ENCODE measurements at regions of chr6 and their contacts with region 1.

Region 1: GRCh38 chr6:105077596-105078385 is 102.0 kb downstream of the POPDC3 start:
- DNase-seq: peak; percentile 72
- H3K4me3 ChIP-seq: no peak overlapping the region
- H3K27ac ChIP-seq: no peak overlapping the region
- H3K4me1 ChIP-seq: no peaks in the 10 kb centered on the region
- H3K27me3 ChIP-seq: peaks cover 0 to 2% of the 10 kb centered on the region in 2 experiments
- CTCF ChIP-seq: peak in 1 of 2 donors; percentile 31
- POLR2A ChIP-seq: no peak

Region 2: DNA sequence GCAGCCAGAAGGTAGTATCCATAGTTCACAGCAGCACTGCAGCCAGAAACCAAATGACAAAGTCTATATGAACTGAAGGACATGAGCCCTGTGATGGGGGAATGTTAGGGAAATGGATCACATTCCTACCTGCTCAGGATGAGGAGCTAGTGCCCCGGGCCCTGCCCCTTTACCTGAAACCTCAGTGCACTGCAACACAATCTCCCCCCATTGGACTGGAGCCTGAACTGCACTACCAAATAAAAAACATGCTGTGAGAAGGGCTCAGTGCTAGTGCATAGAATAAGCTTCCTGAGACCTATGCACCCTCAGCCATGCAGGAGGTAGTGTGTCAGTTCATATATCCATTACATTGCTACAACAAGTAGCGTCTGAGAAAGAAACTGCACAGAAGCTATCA is 695.9 kb before region 1 on chr6:
- CTCF ChIA-PET with region 1: no interaction called
- POLR2A ChIA-PET with region 1: no interaction called
- dilution Hi-C with region 1: no loop called
- intact Hi-C with region 1: no loop called
- DNase-seq: no peak
- H3K4me3 ChIP-seq: no peak overlapping the region
- H3K27ac ChIP-seq: no peak overlapping the region
- H3K4me1 ChIP-seq: no peaks in the 10 kb centered on the region
- H3K27me3 ChIP-seq: no peaks in the 10 kb centered on the region
- CTCF ChIP-seq: no peak
- POLR2A ChIP-seq: no peak

Region 3: GRCh38 chr6:104789770-104790190 is 288.0 kb before region 1 on chr6:
- CTCF ChIA-PET with region 1: interaction called, 91 read pairs
- POLR2A ChIA-PET with region 1: no interaction called
- dilution Hi-C with region 1: no loop called
- intact Hi-C with region 1: loop called (anchors 1 kb)
- DNase-seq: peak; percentile 52
- H3K4me3 ChIP-seq: no peak overlapping the region
- H3K27ac ChIP-seq: no peak overlapping the region
- H3K4me1 ChIP-seq: peaks cover 6% of the 10 kb centered on the region
- H3K27me3 ChIP-seq: no peaks in the 10 kb centered on the region
- CTCF ChIP-seq: peak in 1 of 2 donors; percentile 24
- POLR2A ChIP-seq: no peak

Region 4: DNA sequence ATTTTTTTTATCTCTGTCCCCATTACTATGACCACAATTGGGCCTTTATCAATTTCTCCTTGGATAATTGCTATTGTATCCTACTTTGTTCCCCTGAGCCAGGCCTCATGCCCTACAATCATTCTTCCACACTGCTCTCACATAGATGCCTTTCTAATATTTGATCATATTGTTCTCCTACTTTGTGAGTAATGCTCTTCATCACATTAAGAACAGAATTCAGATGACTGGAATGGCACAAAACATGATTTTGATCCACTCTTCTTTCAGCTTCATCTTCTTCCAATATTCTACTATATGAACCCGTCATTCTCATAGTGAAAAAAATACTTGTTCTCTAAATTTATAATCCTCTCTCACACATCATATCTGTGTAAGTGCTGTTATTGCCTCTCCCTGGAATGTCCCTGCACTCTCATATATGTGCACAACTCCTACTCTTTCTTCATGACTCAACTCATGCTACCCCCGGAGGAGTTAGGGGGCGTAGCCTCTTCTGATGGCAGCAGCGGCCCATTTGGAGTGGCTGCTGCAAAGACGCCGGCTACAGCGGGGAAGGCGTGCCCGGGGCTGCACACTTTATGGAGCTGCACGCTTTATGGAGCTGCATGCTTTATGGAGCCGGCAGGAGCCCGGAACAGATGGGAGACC is 192.8 kb before region 1 on chr6:
- CTCF ChIA-PET with region 1: no interaction called
- POLR2A ChIA-PET with region 1: no interaction called
- dilution Hi-C with region 1: no loop called
- intact Hi-C with region 1: no loop called
- DNase-seq: no peak
- H3K4me3 ChIP-seq: no peak overlapping the region
- H3K27ac ChIP-seq: no peak overlapping the region
- H3K4me1 ChIP-seq: no peaks in the 10 kb centered on the region
- H3K27me3 ChIP-seq: peaks cover 3 to 4% of the 10 kb centered on the region in 2 experiments
- CTCF ChIP-seq: no peak
- POLR2A ChIP-seq: no peak

Region 5: DNA sequence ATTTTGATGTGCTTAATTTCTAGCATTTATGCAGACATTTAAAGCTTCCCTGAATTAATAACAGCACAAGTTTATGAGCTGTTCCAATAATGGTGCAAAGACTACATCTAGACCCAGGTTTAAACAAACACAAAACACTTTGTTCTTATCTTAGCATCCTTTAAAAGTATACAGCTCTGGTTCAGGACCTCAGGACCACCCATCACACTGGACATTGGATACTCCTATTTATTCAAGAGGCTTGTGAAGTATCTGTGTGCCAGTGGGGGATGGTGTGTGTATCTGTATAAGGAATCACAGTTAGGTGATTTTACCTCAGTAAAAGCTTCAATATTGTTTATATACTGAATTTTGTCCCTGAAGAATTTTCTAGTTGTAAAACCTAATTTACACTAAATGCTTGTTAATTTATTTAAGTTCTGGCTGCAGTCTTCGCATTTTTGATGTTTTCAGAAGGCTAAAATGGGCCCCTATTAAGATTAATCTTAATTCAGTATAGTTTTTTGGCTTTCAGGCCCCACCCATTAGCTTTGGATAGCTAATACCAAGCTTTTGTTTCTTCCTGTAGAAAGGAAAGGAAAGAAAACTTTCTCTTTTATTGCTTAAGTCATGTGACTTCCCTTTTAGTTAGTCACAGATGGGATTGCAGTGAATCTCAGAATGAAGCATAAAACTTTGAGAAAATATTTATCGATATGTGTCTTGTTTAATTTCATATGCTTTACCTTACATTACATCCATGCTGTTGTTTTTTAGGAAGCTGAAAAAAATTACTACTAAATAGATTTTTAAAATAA is 107.8 kb before region 1 on chr6:
- CTCF ChIA-PET with region 1: interaction called, 23 read pairs
- POLR2A ChIA-PET with region 1: no interaction called
- dilution Hi-C with region 1: no loop called
- intact Hi-C with region 1: no loop called
- DNase-seq: peak; percentile 22
- H3K4me3 ChIP-seq: no peak overlapping the region
- H3K27ac ChIP-seq: no peak overlapping the region
- H3K4me1 ChIP-seq: peaks cover 4% of the 10 kb centered on the region
- H3K27me3 ChIP-seq: no peaks in the 10 kb centered on the region
- CTCF ChIP-seq: no peak
- POLR2A ChIP-seq: no peak

Region 6: DNA sequence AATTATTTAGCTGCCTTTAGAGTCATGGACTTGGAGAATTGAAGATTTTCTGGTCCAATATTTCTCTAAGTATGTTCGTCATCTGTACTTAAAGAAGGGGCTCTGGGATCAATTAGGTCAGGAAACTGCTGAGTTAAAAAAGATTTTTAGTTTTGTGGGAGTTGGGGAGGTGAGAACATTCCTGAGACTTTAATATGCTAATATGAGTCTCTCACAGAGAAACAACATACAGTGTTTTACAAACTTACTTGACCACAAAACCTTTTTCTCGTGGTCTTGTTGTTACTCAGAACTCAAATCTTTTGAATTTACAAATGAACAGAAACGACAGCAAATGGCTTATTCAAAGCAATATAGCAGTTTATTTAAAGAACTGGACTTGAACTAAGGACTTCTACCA is 53.0 kb before region 1 on chr6:
- CTCF ChIA-PET with region 1: interaction called, 12 read pairs
- POLR2A ChIA-PET with region 1: no interaction called
- dilution Hi-C with region 1: no loop called
- intact Hi-C with region 1: no loop called
- DNase-seq: no peak
- H3K4me3 ChIP-seq: no peak overlapping the region
- H3K27ac ChIP-seq: no peak overlapping the region
- H3K4me1 ChIP-seq: no peaks in the 10 kb centered on the region
- H3K27me3 ChIP-seq: no peaks in the 10 kb centered on the region
- CTCF ChIP-seq: no peak
- POLR2A ChIP-seq: no peak

Region 7: DNA sequence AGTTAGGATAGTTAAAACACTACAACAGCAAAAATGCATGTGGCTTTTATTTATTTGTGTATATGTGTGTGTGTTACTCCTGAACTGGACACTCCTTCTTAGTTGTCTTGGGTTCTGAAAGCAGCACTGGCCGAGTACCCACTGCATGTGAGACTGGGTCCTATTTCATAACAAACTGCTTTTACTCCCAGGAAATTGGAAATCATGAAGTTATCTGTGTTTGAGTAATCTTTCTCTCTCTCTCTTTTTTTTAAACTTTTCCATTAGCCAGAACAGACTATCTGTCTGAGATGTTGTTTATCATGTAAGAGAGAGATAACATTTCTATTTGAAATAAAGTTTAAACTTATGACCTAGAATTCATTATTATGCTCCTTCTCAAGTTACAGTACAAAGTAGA is 10.5 kb before region 1 on chr6:
- CTCF ChIA-PET with region 1: interaction called, 16 read pairs
- POLR2A ChIA-PET with region 1: no interaction called
- dilution Hi-C with region 1: no loop called
- intact Hi-C with region 1: no loop called
- DNase-seq: no peak
- H3K4me3 ChIP-seq: no peak overlapping the region
- H3K27ac ChIP-seq: no peak overlapping the region
- H3K4me1 ChIP-seq: no peaks in the 10 kb centered on the region
- H3K27me3 ChIP-seq: no peaks in the 10 kb centered on the region
- CTCF ChIP-seq: no peak
- POLR2A ChIP-seq: no peak